ENCODE measurements at regions of chrX and their contacts with region 1.

Region 1: DNA sequence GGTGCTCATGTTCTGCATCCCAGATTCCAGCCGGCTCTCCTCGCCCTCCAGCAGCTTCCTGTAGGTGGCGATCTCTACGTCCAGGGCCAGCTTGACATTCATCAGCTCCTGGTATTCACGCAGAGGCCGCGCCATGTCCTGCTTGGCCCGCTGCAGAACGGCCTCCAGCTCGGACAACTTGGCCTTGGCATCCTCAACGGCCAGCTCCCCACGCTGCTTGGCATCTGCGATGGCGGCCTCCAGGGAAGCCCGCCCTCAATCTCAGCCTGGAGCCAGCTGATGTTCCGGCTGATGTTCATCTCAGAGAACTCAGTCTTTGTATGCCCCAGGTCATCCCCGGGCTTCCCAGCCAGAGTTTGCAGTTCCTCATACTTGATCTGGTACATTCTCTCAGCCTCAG is 431.8 kb upstream of the DIPK2B start:
- DNase-seq: no peak
- H3K4me3 ChIP-seq: no peak overlapping the region
- H3K27ac ChIP-seq: no peak overlapping the region
- H3K4me1 ChIP-seq: no peaks in the 10 kb centered on the region
- H3K27me3 ChIP-seq: no peaks in the 10 kb centered on the region
- CTCF ChIP-seq: no peak
- POLR2A ChIP-seq: no peak

Region 2: DNA sequence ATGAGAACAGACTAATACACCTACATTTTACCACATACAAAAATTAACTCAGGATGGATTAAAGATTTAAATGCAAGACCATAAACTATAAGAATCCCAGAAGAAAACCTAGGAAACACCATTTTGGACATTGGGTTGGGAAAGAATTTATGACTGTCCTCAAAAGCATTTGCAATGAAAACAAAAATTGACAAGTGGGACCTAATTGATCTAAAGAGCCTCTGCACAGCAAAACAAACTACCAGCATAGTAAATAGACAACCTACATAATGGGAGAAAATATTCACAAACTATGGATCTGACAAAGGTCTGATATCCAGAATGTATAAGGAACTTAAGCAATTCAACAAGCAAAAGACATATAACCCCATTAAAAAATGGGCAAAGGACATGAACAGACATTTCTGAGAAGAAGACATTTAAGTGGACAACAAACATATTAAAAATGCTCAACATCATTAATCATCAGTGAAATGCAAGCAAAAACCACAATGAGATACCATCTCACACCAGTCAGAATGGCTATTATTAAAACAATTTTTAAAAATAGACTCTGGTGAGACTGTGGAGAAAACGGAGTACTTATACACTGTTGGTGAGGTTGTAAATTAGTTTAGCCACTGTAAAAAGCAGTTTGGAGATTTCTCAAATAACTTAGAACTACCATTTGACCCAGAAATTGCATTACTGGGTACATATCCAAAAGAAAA is 210.1 kb before region 1 on chrX:
- intact Hi-C with region 1: loop called (anchors 5 kb)
- DNase-seq: no peak
- H3K4me3 ChIP-seq: no peak overlapping the region
- H3K27ac ChIP-seq: no peak overlapping the region
- H3K4me1 ChIP-seq: no peaks in the 10 kb centered on the region
- H3K27me3 ChIP-seq: no peaks in the 10 kb centered on the region
- CTCF ChIP-seq: no peak
- POLR2A ChIP-seq: no peak

Region 3: GRCh38 chrX:46168254-46168653 is 535.7 kb after region 1 on chrX:
- intact Hi-C with region 1: no loop called
- DNase-seq: no peak
- H3K4me3 ChIP-seq: no peak overlapping the region
- H3K27ac ChIP-seq: no peak overlapping the region
- H3K4me1 ChIP-seq: no peaks in the 10 kb centered on the region
- H3K27me3 ChIP-seq: no peaks in the 10 kb centered on the region
- CTCF ChIP-seq: no peak
- POLR2A ChIP-seq: no peak